ENCODE measurements at regions of chr1 and their contacts with region 1.

Region 1: DNA sequence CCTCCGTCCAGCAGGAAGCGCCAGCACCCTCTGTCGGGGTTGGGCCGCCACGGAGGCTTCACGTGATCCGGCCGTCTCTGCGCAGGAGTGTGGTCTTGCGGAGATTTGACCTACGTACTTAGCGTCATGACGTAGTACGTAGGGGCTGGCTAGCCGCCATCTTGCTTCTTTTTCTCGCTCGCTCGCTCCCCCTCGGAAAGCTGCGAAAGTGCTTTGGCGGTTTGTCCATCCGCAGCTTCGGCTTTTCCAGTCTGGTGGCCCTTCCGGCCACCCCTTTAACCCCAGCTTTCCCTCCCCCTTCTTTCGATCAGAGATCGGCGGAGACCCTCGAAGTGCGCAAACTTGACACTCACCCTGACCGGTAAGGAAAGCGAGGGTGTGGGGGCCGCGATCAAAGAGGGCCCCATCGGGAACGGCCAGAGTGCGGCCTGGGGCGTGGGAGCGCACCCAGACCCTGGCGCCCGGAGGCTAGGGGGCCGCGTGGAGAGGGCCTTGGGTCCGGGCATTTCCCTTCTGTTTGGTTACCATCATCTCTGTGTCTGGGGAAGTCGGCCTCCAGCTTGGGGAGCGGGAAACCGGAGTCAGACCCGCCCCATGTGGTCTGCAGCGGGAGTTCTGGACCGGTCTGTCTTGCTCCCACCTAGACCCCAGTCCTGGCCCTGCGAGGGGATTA is at the start of gene PRRC2C:
- DNase-seq: peak; percentile 87 to 99 (median 94)
- ATAC-seq: peak; percentile 79
- H3K4me3 ChIP-seq: peak within 1 kb of the TSS; percentile 93 to 97
- H3K4me3 Mint-ChIP-seq: peak within 1 kb of the TSS; percentile 90
- H3K27ac ChIP-seq: peak within 1 kb of the TSS; percentile 96 to 100
- H3K27ac Mint-ChIP-seq: peak within 1 kb of the TSS; percentile 95
- H3K4me1 ChIP-seq: peaks cover 44% of the 10 kb centered on the region
- H3K4me1 Mint-ChIP-seq: peaks cover 48% of the 10 kb centered on the region
- H3K27me3 ChIP-seq: no peaks in the 10 kb centered on the region
- H3K27me3 Mint-ChIP-seq: no peaks in the 10 kb centered on the region
- CTCF ChIP-seq: peak; percentile 89
- total RNA-seq, gene PRRC2C: 416 to 423 TPM

Region 2: GRCh38 chr1:170531758-170532657 is 953.5 kb before region 1 on chr1 and contains the start of gene GORAB:
- CTCF ChIA-PET with region 1: no interaction called
- POLR2A ChIA-PET with region 1: no interaction called
- intact Hi-C with region 1: loop called in 1 of 2 experiments (anchors 5 kb)
- DNase-seq: peak; percentile 72 to 93 (median 85)
- ATAC-seq: peak; percentile 90
- H3K4me3 ChIP-seq: peak within 1 kb of the TSS; percentile 73 to 86
- H3K4me3 Mint-ChIP-seq: no peak within 1 kb of the TSS
- H3K27ac ChIP-seq: peak within 1 kb of the TSS; percentile 80 to 91
- H3K27ac Mint-ChIP-seq: no peak within 1 kb of the TSS
- H3K4me1 ChIP-seq: peaks cover 14% of the 10 kb centered on the region
- H3K4me1 Mint-ChIP-seq: peaks cover 22% of the 10 kb centered on the region
- H3K27me3 ChIP-seq: no peaks in the 10 kb centered on the region
- H3K27me3 Mint-ChIP-seq: no peaks in the 10 kb centered on the region
- CTCF ChIP-seq: no peak
- total RNA-seq, gene GORAB: 24.8 to 26.1 TPM

Region 3: GRCh38 chr1:171501305-171502024 is 16.0 kb after region 1 on chr1:
- CTCF ChIA-PET with region 1: interaction called, 24 read pairs
- POLR2A ChIA-PET with region 1: interaction called, 11 read pairs
- intact Hi-C with region 1: loop called (anchors 2 kb)
- DNase-seq: no peak
- ATAC-seq: no peak
- H3K4me3 ChIP-seq: no peak overlapping the region
- H3K4me3 Mint-ChIP-seq: no peak overlapping the region
- H3K27ac ChIP-seq: no peak overlapping the region
- H3K27ac Mint-ChIP-seq: peak overlapping the region; percentile 6
- H3K4me1 ChIP-seq: peaks cover 71% of the 10 kb centered on the region
- H3K4me1 Mint-ChIP-seq: peaks cover 92% of the 10 kb centered on the region
- H3K27me3 ChIP-seq: no peaks in the 10 kb centered on the region
- H3K27me3 Mint-ChIP-seq: no peaks in the 10 kb centered on the region
- CTCF ChIP-seq: no peak

Region 4: DNA sequence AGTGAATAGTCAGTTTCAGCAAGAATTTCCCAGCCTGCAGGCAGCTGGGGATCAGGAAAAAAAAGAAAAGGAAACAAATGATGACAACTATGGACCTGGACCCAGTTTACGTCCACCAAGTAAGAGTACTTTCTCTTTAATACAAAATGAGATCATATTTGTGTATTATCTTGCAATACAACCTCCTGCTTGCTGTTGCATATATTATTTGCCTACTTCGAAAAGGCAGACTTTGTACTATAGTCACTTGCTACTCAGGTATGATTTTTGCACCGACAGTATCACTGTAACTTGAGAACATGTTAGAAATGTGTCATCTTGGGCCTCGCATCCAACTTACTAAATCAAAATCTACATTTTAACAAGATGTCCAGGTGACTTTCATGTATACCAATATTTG is 30.2 kb after region 1 on chr1:
- CTCF ChIA-PET with region 1: interaction called, 7 read pairs
- POLR2A ChIA-PET with region 1: interaction called, 7 read pairs
- intact Hi-C with region 1: loop called (anchors 2 to 5 kb)
- DNase-seq: no peak
- ATAC-seq: no peak
- H3K4me3 ChIP-seq: no peak overlapping the region
- H3K4me3 Mint-ChIP-seq: no peak overlapping the region
- H3K27ac ChIP-seq: no peak overlapping the region
- H3K27ac Mint-ChIP-seq: no peak overlapping the region
- H3K4me1 ChIP-seq: peaks cover under 1% of the 10 kb centered on the region
- H3K4me1 Mint-ChIP-seq: peaks cover 44% of the 10 kb centered on the region
- H3K27me3 ChIP-seq: no peaks in the 10 kb centered on the region
- H3K27me3 Mint-ChIP-seq: no peaks in the 10 kb centered on the region
- CTCF ChIP-seq: no peak

Region 5: DNA sequence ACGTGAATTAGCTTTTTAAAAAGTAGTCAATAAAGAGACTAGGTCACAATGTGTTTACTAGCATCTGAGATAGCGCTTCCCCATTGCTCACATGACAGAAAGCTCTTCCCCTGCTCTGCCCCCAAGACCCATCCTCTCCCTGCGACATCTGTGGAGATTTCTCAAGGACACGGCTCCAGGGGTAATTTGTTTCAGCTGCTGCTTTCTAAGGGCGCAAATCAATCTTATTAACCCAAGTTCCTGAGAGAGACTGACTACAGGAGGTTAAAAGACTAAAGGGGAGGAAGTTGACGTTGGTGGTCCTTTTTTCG is 136.6 kb after region 1 on chr1 and contains the start of gene MYOCOS:
- CTCF ChIA-PET with region 1: no interaction called
- POLR2A ChIA-PET with region 1: no interaction called
- intact Hi-C with region 1: no loop called
- DNase-seq: no peak
- ATAC-seq: no peak
- H3K4me3 ChIP-seq: no peak within 1 kb of the TSS
- H3K4me3 Mint-ChIP-seq: no peak within 1 kb of the TSS
- H3K27ac ChIP-seq: no peak within 1 kb of the TSS
- H3K27ac Mint-ChIP-seq: no peak within 1 kb of the TSS
- H3K4me1 ChIP-seq: no peaks in the 10 kb centered on the region
- H3K4me1 Mint-ChIP-seq: no peaks in the 10 kb centered on the region
- H3K27me3 ChIP-seq: no peaks in the 10 kb centered on the region
- H3K27me3 Mint-ChIP-seq: peaks cover 12% of the 10 kb centered on the region
- CTCF ChIP-seq: no peak
- total RNA-seq, gene MYOCOS: not detected

Region 6: DNA sequence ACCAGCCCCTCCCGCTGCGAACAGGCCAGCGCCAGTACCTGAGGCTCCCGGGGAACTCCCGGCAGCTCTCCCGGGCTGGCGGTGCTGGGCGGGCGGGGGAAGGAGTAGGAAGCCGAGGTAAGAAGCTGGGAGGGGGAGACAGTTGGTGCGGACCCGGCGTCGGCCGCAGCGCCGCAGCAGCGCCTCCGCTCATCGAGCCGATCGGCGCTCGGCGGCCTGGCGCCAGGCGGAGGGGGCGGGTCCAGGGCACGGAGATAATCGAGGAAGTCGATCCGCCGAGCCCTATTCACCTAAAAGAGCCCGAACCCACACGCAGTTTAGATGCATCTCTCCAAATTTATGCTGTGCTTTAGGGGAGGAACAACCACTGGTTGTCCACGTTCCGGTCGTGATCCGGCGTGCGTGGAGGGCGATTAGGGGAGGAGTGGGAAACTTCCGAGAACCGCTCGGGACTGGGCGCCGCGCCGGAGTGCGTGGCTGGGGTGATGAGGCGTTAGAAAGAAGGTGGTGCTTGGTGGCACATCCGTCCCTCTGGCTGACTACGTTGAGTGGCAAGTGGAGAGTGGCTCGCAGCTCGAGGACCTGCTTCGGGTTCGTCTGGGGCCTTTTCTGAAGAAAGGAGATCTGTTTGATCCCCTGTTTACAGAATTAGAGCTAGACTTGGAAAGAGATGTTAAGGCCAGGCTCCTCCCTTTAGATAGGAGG is 256.5 kb after region 1 on chr1 and contains the start of gene VAMP4:
- CTCF ChIA-PET with region 1: interaction called, 9 read pairs
- POLR2A ChIA-PET with region 1: interaction called, 12 read pairs
- intact Hi-C with region 1: loop called (anchors 1 to 2 kb)
- DNase-seq: peak; percentile 72 to 93 (median 85)
- ATAC-seq: peak; percentile 87
- H3K4me3 ChIP-seq: peak within 1 kb of the TSS; percentile 94 to 99
- H3K4me3 Mint-ChIP-seq: peak within 1 kb of the TSS; percentile 100
- H3K27ac ChIP-seq: peak within 1 kb of the TSS; percentile 96 to 99
- H3K27ac Mint-ChIP-seq: peak within 1 kb of the TSS; percentile 100
- H3K4me1 ChIP-seq: peaks cover 39% of the 10 kb centered on the region
- H3K4me1 Mint-ChIP-seq: peaks cover 51% of the 10 kb centered on the region
- H3K27me3 ChIP-seq: no peaks in the 10 kb centered on the region
- H3K27me3 Mint-ChIP-seq: no peaks in the 10 kb centered on the region
- CTCF ChIP-seq: no peak
- total RNA-seq, gene VAMP4: 8.4 to 8.6 TPM

Region 7: GRCh38 chr1:171841050-171841940 is 355.8 kb after region 1 on chr1 and contains the start of gene DNM3:
- CTCF ChIA-PET with region 1: no interaction called
- POLR2A ChIA-PET with region 1: no interaction called
- intact Hi-C with region 1: loop called in 1 of 2 experiments (anchors 5 kb)
- DNase-seq: peak; percentile 51 to 89 (median 77)
- ATAC-seq: peak; percentile 94
- H3K4me3 ChIP-seq: peak within 1 kb of the TSS; percentile 75 to 80
- H3K4me3 Mint-ChIP-seq: peak within 1 kb of the TSS; percentile 87
- H3K27ac ChIP-seq: no peak within 1 kb of the TSS
- H3K27ac Mint-ChIP-seq: peak within 1 kb of the TSS; percentile 16
- H3K4me1 ChIP-seq: peaks cover 9% of the 10 kb centered on the region
- H3K4me1 Mint-ChIP-seq: peaks cover 14% of the 10 kb centered on the region
- H3K27me3 ChIP-seq: peaks cover 4 to 9% of the 10 kb centered on the region in 2 experiments
- H3K27me3 Mint-ChIP-seq: peaks cover 16% of the 10 kb centered on the region
- CTCF ChIP-seq: no peak
- total RNA-seq, gene DNM3: 0.72 to 1.1 TPM

Measured in CD8-positive, alpha-beta T cell (primary cell).